Cardiac septum (tissue), 1 donor: ENCODE measurements at regions of chr6 and their contacts with region 1.

Region 1: GRCh38 chr6:139981768-139982181 is 607.3 kb upstream of the CITED2 start:
- DNase-seq: no peak

Region 2: GRCh38 chr6:139764498-139764986 is 217.2 kb before region 1 on chr6:
- intact Hi-C with region 1: loop called (anchors 10 kb)
- DNase-seq: no peak

Region 3: DNA sequence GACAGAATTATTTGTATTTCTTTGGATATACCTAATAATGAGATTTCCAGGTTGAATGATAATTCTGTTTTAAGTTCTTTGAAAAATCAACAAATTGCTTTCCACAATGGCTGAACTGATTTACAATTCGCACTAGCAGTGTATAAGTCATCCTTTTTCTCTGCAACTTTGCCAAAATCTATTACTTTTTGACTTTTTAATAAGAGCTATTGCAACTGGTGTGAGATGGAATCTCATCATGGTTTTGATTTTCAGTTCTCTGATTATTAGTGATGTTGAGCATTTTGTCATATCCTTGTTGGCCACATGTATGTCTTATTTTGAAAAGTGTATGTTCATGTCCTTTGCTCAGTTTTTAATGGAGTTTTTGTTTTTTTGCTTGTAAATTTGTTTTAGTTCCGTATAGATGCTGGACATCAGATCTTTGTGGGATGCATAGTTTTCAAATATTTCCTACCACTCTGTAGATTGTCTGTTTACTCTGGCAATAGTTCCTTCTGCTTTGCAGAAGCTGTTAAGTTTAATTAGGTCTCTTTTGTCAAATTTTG is 197.5 kb before region 1 on chr6:
- intact Hi-C with region 1: no loop called
- DNase-seq: no peak

Region 4: GRCh38 chr6:139881728-139882211 is 100.0 kb before region 1 on chr6:
- intact Hi-C with region 1: loop called (anchors 5 kb)
- DNase-seq: no peak

Region 5: DNA sequence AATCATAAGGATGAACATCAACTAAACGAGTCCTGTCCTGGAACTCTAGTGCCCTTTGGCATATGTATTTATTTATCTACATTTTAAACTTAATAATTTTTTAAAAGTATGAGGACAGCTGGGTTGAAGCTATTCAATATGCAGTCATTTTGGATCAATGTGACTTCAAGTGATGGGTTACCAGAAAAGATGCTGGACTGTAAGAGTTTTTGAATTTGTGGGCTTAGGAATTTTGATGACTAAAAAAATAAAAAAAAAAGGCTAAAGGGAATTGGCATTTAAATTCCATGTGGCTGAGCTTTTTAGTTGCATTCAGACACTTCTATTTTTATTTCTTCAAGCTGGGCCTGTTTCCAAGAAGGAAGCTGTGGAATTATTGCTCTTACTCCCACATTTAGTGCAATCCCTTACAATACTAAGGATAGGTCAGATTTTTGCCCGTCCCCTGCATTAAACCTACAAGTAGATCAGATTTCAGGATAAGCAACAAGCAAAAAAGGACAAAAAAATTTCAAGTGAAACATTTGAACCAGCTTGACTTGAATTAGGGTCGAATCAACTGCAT is 96.9 kb after region 1 on chr6:
- intact Hi-C with region 1: loop called (anchors 5 kb)
- DNase-seq: no peak

Region 6: GRCh38 chr6:140441256-140441655 is 459.5 kb after region 1 on chr6:
- intact Hi-C with region 1: loop called (anchors 10 kb)
- DNase-seq: peak; percentile 81